Transverse colon (tissue), 4 donors: ENCODE measurements at regions of chrX and their contacts with region 1.

Region 1: GRCh38 chrX:100768679-100769338 is 36.9 kb upstream of the SYTL4 start:
- DNase-seq: peak; percentile 94
- H3K4me3 ChIP-seq: no peak overlapping the region
- H3K27ac ChIP-seq: no peak overlapping the region
- H3K4me1 ChIP-seq: no peaks in the 10 kb centered on the region
- H3K27me3 ChIP-seq: no peaks in the 10 kb centered on the region
- CTCF ChIP-seq: peak; percentile 93 to 100 (median 99)
- EP300 ChIP-seq: no peak
- POLR2A ChIP-seq: no peak

Region 2: DNA sequence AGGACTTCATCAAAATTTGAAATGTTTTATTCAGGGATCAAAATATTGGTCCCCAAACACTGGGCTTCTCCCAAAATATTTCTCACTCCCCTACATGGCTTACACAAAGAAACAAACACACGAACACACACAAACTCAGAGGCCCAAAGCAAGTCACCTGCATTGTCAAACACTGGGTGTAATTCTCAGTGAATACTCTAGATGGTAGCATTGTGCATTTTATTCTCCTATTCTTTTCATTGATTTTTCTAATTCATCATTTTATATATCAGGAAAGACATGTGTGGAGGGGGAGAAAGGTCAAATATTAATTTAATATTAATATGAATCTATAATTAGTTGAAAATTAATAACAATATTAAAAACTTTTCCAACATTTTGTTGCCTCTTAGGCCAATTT is 256.3 kb before region 1 on chrX:
- in situ Hi-C with region 1: loop called in 1 of 4 experiments (anchors 25 kb)
- intact Hi-C with region 1: no loop called
- DNase-seq: no peak
- H3K4me3 ChIP-seq: no peak overlapping the region
- H3K27ac ChIP-seq: no peak overlapping the region
- H3K4me1 ChIP-seq: no peaks in the 10 kb centered on the region
- H3K27me3 ChIP-seq: no peaks in the 10 kb centered on the region
- CTCF ChIP-seq: peak; percentile 45 to 79 (median 56)
- EP300 ChIP-seq: no peak
- POLR2A ChIP-seq: no peak

Region 3: DNA sequence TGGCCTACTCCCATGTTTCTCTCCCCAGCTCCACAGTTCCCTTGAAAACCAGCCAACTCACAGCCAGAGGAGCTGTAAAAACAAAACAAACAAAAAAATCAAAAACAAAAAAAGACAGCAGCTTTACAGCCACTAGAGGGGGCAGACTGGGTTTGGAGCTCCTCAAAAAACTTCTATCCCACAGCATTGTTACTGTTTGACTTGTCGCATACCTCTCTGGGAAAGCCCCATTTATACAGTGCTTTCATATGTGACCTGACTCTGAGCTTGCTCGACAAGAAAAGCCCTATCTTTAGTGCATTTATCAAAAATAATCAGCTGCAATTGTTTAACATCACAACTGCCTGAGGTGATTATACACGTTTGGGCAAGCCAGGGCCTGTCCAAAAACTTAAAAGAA is 153.8 kb before region 1 on chrX:
- in situ Hi-C with region 1: no loop called
- intact Hi-C with region 1: no loop called
- DNase-seq: peak; percentile 18
- H3K4me3 ChIP-seq: no peak overlapping the region
- H3K27ac ChIP-seq: no peak overlapping the region
- H3K4me1 ChIP-seq: no peaks in the 10 kb centered on the region
- H3K27me3 ChIP-seq: no peaks in the 10 kb centered on the region
- CTCF ChIP-seq: peak; percentile 18 to 40 (median 34)
- EP300 ChIP-seq: no peak
- POLR2A ChIP-seq: no peak

Region 4: GRCh38 chrX:100685284-100685996 is 83.4 kb before region 1 on chrX:
- in situ Hi-C with region 1: loop called (anchors 5 to 10 kb)
- intact Hi-C with region 1: loop called (anchors 2 kb)
- DNase-seq: peak; percentile 81
- H3K4me3 ChIP-seq: no peak overlapping the region
- H3K27ac ChIP-seq: peak overlapping the region in 2 of 4 donors; percentile 21 to 31
- H3K4me1 ChIP-seq: peaks cover 0 to 4% (median 0%) of the 10 kb centered on the region in 4 donors
- H3K27me3 ChIP-seq: no peaks in the 10 kb centered on the region
- CTCF ChIP-seq: peak; percentile 74 to 98 (median 77)
- EP300 ChIP-seq: no peak
- POLR2A ChIP-seq: no peak

Region 5: DNA sequence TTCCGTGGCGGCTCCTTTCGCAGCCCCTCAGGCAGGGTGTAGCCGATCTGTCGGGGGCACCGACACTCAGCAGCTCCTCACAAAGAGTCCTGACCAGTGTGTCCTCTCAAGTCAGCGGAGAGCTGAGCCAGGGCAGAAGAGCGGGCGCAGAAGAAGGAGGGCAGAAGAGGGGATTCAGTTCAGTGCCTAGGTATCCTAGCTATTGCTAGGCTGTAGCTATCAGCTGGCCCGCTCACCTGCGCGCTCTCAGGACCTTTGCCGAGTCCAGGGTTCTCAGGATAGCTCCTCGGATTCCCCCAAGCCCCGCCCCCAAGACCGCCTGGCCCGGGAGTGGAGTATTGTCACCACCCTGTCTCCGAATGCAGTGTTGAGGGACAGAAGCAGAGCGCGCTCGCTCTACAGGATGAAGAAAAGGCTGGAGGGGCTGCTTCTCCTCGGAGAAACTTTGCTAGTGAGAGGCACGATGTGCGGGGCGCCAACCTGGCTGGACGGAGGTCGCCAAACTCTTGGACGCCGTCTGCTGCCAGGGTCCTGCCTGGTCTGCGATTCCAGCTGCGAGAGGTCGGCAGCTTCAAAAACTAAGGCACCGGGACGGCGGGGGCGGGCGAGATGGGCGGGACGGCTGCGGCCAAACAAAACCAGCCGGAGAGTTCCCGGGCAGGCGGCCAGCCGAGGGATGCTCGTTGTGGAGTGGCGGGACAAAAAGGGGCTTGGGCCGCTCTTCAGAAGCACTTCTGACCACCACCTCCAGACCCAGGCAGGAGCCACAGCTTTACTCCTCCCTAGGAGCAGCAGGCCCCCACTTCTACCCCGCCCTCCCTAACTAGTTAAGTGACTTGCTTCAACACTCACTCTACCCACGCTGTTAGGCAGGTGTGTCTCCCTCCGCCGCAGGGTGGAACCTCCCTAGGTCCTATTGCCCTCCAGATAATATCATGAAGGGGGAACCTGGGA is 160.1 kb after region 1 on chrX and contains the start of gene XKRX:
- in situ Hi-C with region 1: no loop called
- intact Hi-C with region 1: no loop called
- DNase-seq: peak; percentile 71
- H3K4me3 ChIP-seq: peak within 1 kb of the TSS in 3 of 4 donors; percentile 38 to 56 (median 38)
- H3K27ac ChIP-seq: peak within 1 kb of the TSS; percentile 36 to 66 (median 59)
- H3K4me1 ChIP-seq: peaks cover 0 to 5% (median 0%) of the 10 kb centered on the region in 4 donors
- H3K27me3 ChIP-seq: no peaks in the 10 kb centered on the region
- CTCF ChIP-seq: no peak
- EP300 ChIP-seq: no peak
- POLR2A ChIP-seq: peak; percentile 31
- total RNA-seq, gene XKRX: 1.9 to 5.9 (median 2.2) TPM